ENCODE measurements at regions of chr2 and their contacts with region 1.

Region 1: DNA sequence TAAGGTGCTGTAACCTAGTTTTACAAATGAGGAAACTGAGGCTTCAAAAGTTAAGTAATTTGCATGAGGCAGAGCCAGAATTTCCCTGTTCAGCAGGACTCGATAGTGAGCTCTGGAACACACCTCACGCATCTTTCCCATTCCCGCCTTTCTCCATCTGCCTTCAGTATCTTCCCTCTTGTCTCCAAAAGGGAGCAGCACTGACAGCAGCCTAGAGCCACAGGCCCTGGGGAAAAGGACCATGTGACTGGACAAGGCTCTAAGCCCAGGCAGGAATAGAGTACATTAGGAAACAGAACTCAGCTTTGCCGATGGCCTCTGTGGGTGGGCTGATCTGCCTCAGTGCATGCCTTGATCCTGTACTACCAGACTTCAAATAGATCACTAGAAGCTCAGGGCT is 21.5 kb downstream of the GPR155 start:
- DNase-seq: no peak
- ATAC-seq: no peak
- H3K4me3 ChIP-seq: no peak overlapping the region
- H3K27ac ChIP-seq: no peak overlapping the region
- H3K4me1 ChIP-seq: no peaks in the 10 kb centered on the region
- H3K27me3 ChIP-seq: no peaks in the 10 kb centered on the region
- CTCF ChIP-seq: no peak
- POLR2A ChIP-seq: no peak

Region 2: DNA sequence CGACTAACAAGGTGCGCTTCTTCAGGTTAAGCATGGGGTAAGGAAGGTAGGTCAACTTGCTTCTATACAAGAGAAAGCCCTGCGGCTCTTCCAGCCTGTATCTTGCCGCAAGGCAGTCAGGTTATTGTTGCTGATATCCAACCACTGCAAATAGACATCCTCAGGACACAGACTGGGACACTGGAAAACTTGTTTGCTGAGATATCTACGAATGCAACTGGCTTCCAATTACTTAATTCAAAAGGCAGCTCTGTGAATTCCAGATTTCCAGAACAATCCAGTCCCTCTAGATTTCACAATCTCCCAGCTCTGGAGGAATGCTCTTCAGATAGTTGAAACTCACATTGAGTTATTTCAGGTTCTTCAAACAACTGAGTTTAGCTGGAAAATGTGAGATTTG is 165.2 kb before region 1 on chr2:
- intact Hi-C with region 1: no loop called
- DNase-seq: no peak
- ATAC-seq: no peak
- H3K4me3 ChIP-seq: no peak overlapping the region
- H3K27ac ChIP-seq: no peak overlapping the region
- H3K4me1 ChIP-seq: no peaks in the 10 kb centered on the region
- H3K27me3 ChIP-seq: no peaks in the 10 kb centered on the region
- CTCF ChIP-seq: no peak
- POLR2A ChIP-seq: no peak

Region 3: GRCh38 chr2:174428214-174428613 is 37.1 kb before region 1 on chr2:
- intact Hi-C with region 1: no loop called
- DNase-seq: no peak
- ATAC-seq: no peak
- H3K4me3 ChIP-seq: no peak overlapping the region
- H3K27ac ChIP-seq: peak overlapping the region in 1 of 4 donors; percentile 32
- H3K4me1 ChIP-seq: peaks cover 16% of the 10 kb centered on the region
- H3K27me3 ChIP-seq: no peaks in the 10 kb centered on the region
- CTCF ChIP-seq: no peak
- POLR2A ChIP-seq: no peak

Region 4: DNA sequence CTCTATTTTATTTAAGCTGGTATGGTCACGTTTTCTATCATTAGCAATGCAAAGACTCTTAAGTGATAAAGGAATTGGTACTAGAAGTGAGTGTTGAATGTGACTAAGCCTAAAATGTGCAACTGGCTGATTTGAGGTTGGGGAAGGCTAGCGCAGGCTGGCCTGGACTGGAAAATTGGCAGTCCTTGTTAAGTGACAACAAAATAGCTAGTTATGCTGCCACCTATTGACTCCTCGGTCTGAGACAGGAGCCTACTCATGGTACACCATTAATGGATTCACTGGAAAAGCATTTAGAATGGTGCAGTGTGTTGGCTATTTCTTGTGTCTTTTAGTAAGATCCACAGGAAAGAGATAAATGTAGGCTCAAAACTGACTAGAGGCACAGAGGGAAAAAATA is 138.0 kb after region 1 on chr2:
- intact Hi-C with region 1: loop called (anchors 10 kb)
- DNase-seq: peak; percentile 62 to 77 (median 68)
- ATAC-seq: peak; percentile 89
- H3K4me3 ChIP-seq: no peak overlapping the region
- H3K27ac ChIP-seq: no peak overlapping the region
- H3K4me1 ChIP-seq: no peaks in the 10 kb centered on the region
- H3K27me3 ChIP-seq: no peaks in the 10 kb centered on the region
- CTCF ChIP-seq: peak; percentile 37 to 72 (median 61)
- POLR2A ChIP-seq: no peak

Region 5: GRCh38 chr2:174682578-174683391 is 217.5 kb after region 1 on chr2:
- intact Hi-C with region 1: loop called (anchors 10 kb)
- DNase-seq: peak; percentile 61 to 74 (median 65)
- ATAC-seq: peak; percentile 87
- H3K4me3 ChIP-seq: peak overlapping the region; percentile 42 to 61
- H3K27ac ChIP-seq: peak overlapping the region in 3 of 4 donors; percentile 33 to 59 (median 48)
- H3K4me1 ChIP-seq: peaks cover 24% of the 10 kb centered on the region
- H3K27me3 ChIP-seq: no peaks in the 10 kb centered on the region
- CTCF ChIP-seq: no peak
- POLR2A ChIP-seq: peak in 1 of 3 donors; percentile 17

Measured in body of pancreas (tissue), 4 donors.